Activated naive CD4-positive, alpha-beta T cell treated with anti-CD3 and anti-CD28 coated beads for 36 hours (primary cell): ENCODE measurements at regions of chr4 and their contacts with region 1.

Region 1: DNA sequence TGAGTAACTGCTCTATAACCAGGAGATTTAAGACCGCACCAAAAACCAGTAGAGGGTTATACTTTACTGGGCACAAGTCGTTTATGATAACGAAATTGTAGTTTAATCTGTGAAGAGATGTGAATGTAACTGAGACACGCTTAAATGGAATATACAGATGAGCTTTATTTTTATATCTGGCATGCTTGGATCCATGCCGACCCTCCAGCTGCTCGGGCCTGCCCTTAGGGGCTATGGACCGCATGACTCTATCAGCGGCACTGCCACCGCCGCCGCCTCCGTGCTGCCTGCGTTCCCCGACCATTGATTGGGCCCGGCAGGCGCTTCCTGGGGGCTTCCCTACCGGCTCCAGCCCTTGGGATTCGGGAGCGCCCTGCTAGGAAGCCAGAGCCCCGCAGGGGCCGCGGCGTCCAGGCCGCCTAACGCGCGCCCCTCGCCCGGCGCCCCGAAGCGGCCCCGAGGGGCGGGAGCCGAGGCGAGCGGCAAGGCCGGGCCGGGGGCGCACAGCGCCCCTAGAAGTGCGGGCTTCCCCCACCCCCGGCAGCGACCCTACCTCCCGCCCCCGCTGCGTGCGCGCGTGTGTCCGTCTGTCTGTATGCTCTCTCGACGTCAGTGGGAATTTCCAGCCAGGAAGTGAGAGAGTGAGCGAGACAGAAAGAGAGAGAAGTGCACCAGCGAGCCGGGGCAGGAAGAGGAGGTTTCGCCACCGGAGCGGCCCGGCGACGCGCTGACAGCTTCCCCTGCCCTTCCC is at the start of gene NFKB1:
- DNase-seq: peak; percentile 90
- H3K4me3 Mint-ChIP-seq: peak within 1 kb of the TSS; percentile 96
- H3K27ac Mint-ChIP-seq: peak within 1 kb of the TSS; percentile 96
- H3K4me1 Mint-ChIP-seq: peaks cover 16% of the 10 kb centered on the region
- H3K27me3 Mint-ChIP-seq: no peaks in the 10 kb centered on the region
- total RNA-seq, gene NFKB1: 121 to 134 TPM

Region 2: DNA sequence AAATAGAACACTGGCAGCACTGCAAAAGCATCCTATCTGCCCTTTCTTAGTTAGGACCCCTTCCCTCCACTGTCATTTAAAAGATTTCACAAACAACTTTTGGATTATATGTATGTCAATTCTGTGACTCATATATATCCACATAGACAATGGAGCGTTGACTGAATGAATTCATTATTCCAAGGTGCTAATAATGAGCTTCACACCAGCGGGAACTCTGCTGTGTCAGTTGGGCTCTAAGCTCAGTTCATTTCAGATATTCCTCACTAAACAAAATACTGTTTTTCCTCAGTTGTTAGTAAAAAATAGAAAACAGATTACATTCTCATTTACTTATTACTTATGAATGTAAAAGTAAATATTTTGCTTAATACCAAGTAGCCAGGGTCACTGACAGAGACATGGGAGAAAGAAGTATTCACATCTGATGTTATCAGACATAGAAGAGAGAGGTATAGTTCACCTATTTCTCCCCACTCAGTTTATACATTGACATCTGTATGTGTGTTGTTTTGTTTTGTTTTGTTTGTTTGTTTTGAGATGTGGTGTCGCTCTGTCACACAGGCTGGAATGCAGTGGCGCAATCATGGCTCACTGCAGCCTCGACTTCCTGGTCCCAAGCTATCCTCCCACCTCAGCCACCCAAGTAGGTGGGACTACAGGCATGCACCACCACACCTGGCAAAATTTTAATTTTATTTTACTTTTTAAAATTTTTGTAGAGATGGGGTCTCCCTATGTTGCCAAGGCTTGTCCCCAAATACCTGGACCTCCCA is 11.1 kb after region 1 on chr4:
- CTCF ChIA-PET with region 1: interaction called, 3 read pairs
- intact Hi-C with region 1: loop called (anchors 1 kb)
- DNase-seq: no peak
- H3K4me3 Mint-ChIP-seq: no peak overlapping the region
- H3K27ac Mint-ChIP-seq: no peak overlapping the region
- H3K4me1 Mint-ChIP-seq: peaks cover 79% of the 10 kb centered on the region
- H3K27me3 Mint-ChIP-seq: no peaks in the 10 kb centered on the region

Region 3: GRCh38 chr4:102525097-102525496 is 24.2 kb after region 1 on chr4:
- CTCF ChIA-PET with region 1: interaction called, 6 read pairs
- intact Hi-C with region 1: loop called (anchors 1 kb)
- DNase-seq: peak; percentile 22
- H3K4me3 Mint-ChIP-seq: peak overlapping the region; percentile 47
- H3K27ac Mint-ChIP-seq: peak overlapping the region; percentile 83
- H3K4me1 Mint-ChIP-seq: peaks cover 88% of the 10 kb centered on the region
- H3K27me3 Mint-ChIP-seq: no peaks in the 10 kb centered on the region

Region 4: GRCh38 chr4:102554482-102554881 is 53.6 kb after region 1 on chr4:
- CTCF ChIA-PET with region 1: no interaction called
- intact Hi-C with region 1: loop called (anchors 1 kb)
- DNase-seq: no peak
- H3K4me3 Mint-ChIP-seq: no peak overlapping the region
- H3K27ac Mint-ChIP-seq: no peak overlapping the region
- H3K4me1 Mint-ChIP-seq: peaks cover 41% of the 10 kb centered on the region
- H3K27me3 Mint-ChIP-seq: no peaks in the 10 kb centered on the region

Region 5: GRCh38 chr4:102578819-102579218 is 77.9 kb after region 1 on chr4:
- CTCF ChIA-PET with region 1: no interaction called
- intact Hi-C with region 1: loop called (anchors 2 kb)
- DNase-seq: peak; percentile 24
- H3K4me3 Mint-ChIP-seq: no peak overlapping the region
- H3K27ac Mint-ChIP-seq: no peak overlapping the region
- H3K4me1 Mint-ChIP-seq: peaks cover 65% of the 10 kb centered on the region
- H3K27me3 Mint-ChIP-seq: no peaks in the 10 kb centered on the region

Region 6: GRCh38 chr4:102760645-102761295 is 259.9 kb after region 1 on chr4 and contains the start of gene MANBA:
- CTCF ChIA-PET with region 1: no interaction called
- intact Hi-C with region 1: loop called (anchors 2 kb)
- DNase-seq: peak; percentile 89
- H3K4me3 Mint-ChIP-seq: peak within 1 kb of the TSS; percentile 88
- H3K27ac Mint-ChIP-seq: peak within 1 kb of the TSS; percentile 36
- H3K4me1 Mint-ChIP-seq: peaks cover 27% of the 10 kb centered on the region
- H3K27me3 Mint-ChIP-seq: no peaks in the 10 kb centered on the region
- total RNA-seq, gene MANBA: 9.8 to 11.0 TPM

Region 7: GRCh38 chr4:103075901-103076739 is 575.2 kb after region 1 on chr4:
- CTCF ChIA-PET with region 1: no interaction called
- intact Hi-C with region 1: loop called (anchors 2 kb)
- DNase-seq: peak; percentile 62
- H3K4me3 Mint-ChIP-seq: peak overlapping the region; percentile 82
- H3K27ac Mint-ChIP-seq: peak overlapping the region; percentile 98
- H3K4me1 Mint-ChIP-seq: peaks cover 47% of the 10 kb centered on the region
- H3K27me3 Mint-ChIP-seq: no peaks in the 10 kb centered on the region